ENCODE measurements at regions of chr1 and their contacts with region 1.

Region 1: DNA sequence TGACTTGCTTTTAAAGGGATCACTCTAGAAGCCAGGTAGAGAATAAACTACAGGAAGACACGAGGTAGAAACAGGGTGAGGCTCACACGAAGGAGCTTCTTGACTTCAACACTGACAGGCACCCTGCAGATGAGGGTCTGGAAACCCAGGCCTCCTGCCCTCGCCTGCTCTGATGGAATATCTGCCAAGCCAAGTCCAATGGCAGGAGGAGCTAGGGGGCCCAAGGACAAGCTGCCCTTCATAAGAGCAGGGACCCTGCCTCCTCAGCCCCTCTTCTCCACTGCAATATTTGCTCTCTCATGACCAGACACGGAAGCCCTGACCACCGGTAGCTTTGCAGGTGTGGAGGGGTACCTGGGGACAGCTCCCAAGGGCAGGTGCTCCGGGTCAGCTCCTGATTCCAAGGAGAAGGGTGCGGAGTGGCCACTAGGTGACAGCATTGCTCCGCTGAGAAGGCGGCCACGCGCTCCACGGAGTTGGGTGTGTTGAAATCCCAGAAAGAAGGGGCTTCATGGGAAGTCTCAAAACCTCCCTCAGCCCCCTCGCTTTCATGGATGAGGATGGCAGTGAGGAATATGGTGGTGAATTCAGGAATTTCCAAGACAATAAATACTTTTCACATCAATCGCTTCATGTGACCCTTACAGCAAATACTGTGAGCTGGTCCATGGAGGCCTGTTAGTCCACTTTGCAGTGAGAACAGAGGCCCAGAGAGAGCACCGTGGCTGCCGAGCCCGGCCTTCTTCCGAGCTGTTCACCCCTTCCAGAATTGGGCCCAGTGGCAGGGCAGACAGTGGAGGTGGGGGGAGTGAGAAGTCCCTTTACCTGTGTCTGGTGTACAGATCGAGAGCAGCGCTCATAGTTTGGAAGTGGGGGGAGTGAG is 33.2 kb upstream of the PAX7 start:
- DNase-seq: peak; percentile 44 to 56 (median 46)
- H3K4me3 ChIP-seq: no peak overlapping the region
- H3K27ac ChIP-seq: no peak overlapping the region
- H3K4me1 ChIP-seq: no peaks in the 10 kb centered on the region
- H3K27me3 ChIP-seq: peaks cover 4 to 66% (median 20%) of the 10 kb centered on the region in 5 experiments

Region 2: GRCh38 chr1:18820791-18821641 is 223.6 kb after region 1 on chr1:
- CTCF ChIA-PET with region 1: interaction called, 67 read pairs
- POLR2A ChIA-PET with region 1: no interaction called
- DNase-seq: peak; percentile 30 to 60 (median 44)
- H3K4me3 ChIP-seq: no peak overlapping the region
- H3K27ac ChIP-seq: no peak overlapping the region
- H3K4me1 ChIP-seq: no peaks in the 10 kb centered on the region
- H3K27me3 ChIP-seq: peaks cover 0 to 52% (median 15%) of the 10 kb centered on the region in 5 experiments

Region 3: DNA sequence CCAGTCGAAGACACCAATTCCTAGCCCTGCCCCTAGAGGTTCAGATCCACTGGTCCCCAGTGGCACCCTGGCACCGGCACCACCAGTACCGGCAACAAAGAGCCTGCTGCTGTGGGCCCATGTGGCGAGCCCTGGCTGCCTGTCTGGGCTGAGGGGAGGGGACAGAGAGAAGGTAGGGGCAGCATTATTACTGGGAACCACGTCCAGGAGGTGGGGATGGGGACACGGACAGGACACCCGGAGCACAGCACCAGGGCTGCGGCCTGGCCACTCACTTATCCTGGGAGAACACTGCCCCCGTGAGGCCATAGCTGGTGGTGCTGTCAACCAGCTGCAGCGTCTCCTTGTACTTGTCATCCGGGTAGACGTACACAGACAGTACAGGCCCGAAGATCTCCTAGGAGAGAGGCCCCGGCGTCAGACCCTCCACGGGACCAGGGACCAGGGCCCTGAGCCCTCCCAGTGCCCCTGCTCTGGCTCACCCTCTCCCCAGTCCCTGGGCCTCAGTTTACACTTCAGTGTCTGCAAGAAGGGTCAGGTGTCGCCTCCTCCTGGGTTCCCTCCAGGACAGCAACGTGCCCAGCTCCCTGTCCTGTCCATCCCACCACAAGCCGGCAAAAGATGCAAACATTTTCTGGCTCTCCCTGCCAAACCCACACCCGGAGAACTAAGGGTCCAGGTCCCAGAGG is 277.9 kb after region 1 on chr1:
- CTCF ChIA-PET with region 1: interaction called, 14 read pairs
- POLR2A ChIA-PET with region 1: no interaction called
- DNase-seq: peak; percentile 70 to 87 (median 81)
- H3K4me3 ChIP-seq: no peak overlapping the region
- H3K27ac ChIP-seq: no peak overlapping the region
- H3K4me1 ChIP-seq: no peaks in the 10 kb centered on the region
- H3K27me3 ChIP-seq: no peaks in the 10 kb centered on the region

Measured in common myeloid progenitor, CD34-positive (primary cell).